Left colon (tissue), 2 donors: ENCODE measurements at regions of chr20 and their contacts with region 1.

Region 1: GRCh38 chr20:38893565-38894090 is 32.6 kb upstream of the FAM83D start:
- DNase-seq: peak in 1 of 2 donors; percentile 80
- ATAC-seq: peak; percentile 91

Region 2: DNA sequence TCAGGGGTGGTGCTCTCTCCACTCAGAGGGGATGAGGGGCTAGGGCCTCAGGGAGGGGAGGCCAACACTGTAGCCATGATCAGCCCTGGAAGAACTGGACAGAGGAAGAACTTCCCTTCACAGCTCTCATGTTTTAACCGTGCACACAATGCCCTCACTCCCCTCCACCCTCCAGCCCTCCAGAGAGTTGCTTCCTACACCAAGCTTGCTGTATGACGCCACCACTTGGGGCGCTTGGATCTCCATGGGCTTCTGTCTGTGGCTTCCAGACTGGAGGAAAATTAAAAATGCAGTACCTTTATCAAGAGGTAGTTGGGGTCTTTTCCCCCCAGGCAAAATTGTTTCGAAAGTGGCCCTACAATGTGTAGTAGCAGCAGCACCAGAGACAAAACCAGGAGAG is 243.6 kb before region 1 on chr20:
- intact Hi-C with region 1: loop called in 1 of 2 experiments (anchors 5 kb)
- DNase-seq: no peak
- ATAC-seq: no peak

Region 3: DNA sequence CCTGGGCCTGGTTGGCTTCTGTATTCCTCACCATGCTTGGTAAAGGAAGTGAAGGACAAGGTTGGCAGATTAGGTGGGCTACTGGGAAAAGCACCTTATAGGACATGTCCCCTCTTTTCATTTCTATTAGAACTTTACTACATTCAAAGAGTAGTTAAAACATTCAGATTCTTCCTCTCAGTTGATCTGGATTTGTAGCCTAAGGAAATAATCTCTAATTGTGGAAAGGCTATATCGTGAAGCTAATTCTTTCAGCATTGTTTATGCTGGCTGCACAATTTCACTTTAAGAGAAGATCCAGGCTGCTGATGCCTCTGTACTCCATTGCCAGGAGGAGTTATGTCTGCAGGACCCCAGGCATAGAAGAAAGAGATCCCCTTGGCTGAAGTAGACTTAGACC is 233.2 kb before region 1 on chr20:
- intact Hi-C with region 1: no loop called
- DNase-seq: no peak
- ATAC-seq: no peak

Region 4: DNA sequence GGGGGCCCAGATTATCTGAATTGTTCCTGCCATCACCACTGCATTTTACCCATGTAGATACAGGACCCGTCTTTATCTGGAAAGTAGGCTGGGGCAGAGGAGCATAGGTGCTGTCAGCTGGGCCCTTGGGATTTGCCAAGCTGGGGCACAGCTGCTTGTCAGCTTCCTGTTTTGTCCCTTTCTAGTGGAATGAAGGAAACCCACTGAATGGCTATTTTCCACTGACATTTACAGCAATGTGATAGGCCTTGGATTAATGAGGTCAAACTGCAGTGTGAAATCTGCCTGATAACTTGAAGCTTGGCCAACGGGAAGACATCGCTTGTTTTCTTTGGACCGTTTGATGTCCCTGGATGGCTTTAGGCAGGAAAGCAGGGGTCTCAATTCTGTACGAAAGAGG is 81.4 kb before region 1 on chr20:
- intact Hi-C with region 1: no loop called
- DNase-seq: no peak
- ATAC-seq: no peak

Region 5: GRCh38 chr20:38962044-38962927 is 68.7 kb after region 1 on chr20 and contains the start of gene DHX35:
- intact Hi-C with region 1: no loop called
- DNase-seq: peak; percentile 98 to 99
- ATAC-seq: peak; percentile 99
- total RNA-seq, gene DHX35: 14.0 to 14.1 TPM